HCT116 (cell line): ENCODE measurements at regions of chr10 and their contacts with region 1.

Region 1: DNA sequence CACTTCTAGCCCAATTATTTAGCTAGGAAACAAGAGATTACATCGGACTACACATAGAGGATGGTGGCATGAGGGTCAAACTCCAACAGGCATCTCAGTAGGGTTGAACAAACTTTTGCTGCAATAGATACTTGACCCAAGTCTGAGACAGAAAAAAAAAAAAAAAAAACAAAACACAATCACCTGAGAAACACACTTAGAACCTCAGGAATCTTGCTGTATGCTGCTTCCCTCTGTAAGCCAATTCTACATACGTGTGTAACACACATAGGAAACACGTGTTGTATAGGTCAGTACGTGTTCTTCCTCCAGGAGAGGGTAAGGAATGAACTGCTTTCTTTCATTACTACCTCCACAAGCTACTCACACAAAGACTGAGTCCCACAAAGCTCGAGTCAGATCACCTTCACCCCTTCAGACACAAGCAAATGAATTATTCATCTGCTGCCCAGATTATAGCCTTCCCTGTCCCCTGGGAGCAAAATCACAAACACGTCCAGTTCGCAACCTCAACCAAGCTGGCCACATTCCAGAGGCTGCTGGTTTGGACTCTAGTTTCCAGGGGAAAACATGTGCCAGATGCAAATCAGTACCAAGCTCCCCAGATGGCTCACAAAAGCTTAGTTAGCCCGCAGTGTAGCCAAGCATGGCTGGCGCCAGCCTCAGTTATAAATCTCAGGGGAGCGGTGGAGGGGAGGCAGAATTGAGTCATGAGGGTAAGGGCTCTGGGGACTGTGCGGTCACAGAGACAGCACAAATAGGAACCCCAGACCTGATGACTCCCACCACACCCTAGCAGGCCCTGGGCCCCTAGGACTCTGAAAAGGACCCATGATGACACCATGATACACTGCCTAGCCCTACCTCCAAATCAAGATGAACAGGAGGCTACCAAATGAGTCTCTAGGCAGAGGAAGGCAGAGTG is 15.1 kb downstream of the PSAP start:
- DNase-seq: no peak
- ATAC-seq: no peak
- H3K4me3 ChIP-seq: no peak overlapping the region
- H3K27ac ChIP-seq: no peak overlapping the region
- H3K4me1 ChIP-seq: peaks cover 18 to 44% of the 10 kb centered on the region in 2 experiments
- H3K27me3 ChIP-seq: no peaks in the 10 kb centered on the region
- CTCF ChIP-seq: no peak
- POLR2A ChIP-seq: no peak
- RAD21 ChIP-seq: no peak

Region 2: DNA sequence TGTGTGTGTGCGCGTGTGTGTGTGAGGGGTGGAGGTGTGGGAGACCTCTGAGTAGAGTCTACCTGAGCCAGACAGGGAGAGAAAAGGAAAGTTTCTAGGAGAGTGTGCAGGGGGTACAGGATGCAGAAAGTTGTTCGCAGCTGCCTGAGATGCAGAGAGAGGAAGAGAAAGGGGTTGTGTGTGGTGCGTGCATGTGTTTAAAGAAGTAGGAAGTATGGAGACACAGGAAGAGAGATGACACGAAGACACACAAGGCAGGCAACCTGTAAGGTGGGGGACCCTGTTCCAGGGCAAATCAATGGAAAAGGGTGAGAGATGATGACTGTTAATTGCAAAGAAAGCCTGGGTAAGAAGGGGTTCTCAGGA is 168.6 kb before region 1 on chr10:
- CTCF ChIA-PET with region 1: no interaction called
- POLR2A ChIA-PET with region 1: no interaction called
- RAD21 ChIA-PET with region 1: no interaction called
- intact Hi-C with region 1: no loop called
- DNase-seq: no peak
- ATAC-seq: no peak
- H3K4me3 ChIP-seq: no peak overlapping the region
- H3K27ac ChIP-seq: no peak overlapping the region
- H3K4me1 ChIP-seq: peaks cover 0 to 7% of the 10 kb centered on the region in 2 experiments; a peak in 2 of 4 replicates
- H3K27me3 ChIP-seq: no peaks in the 10 kb centered on the region
- CTCF ChIP-seq: no peak
- POLR2A ChIP-seq: no peak
- RAD21 ChIP-seq: no peak

Region 3: GRCh38 chr10:71850637-71851464 is 14.9 kb after region 1 on chr10 and contains the start of gene PSAP:
- CTCF ChIA-PET with region 1: interaction called, 6 read pairs
- POLR2A ChIA-PET with region 1: interaction called, 39 read pairs
- RAD21 ChIA-PET with region 1: interaction called in 1 of 2 experiments, 3 read pairs
- intact Hi-C with region 1: no loop called
- DNase-seq: peak; percentile 93
- ATAC-seq: peak; percentile 97
- H3K4me3 ChIP-seq: peak within 1 kb of the TSS; percentile 73 to 98
- H3K27ac ChIP-seq: peak within 1 kb of the TSS; percentile 70
- H3K4me1 ChIP-seq: peaks cover 4 to 30% of the 10 kb centered on the region in 2 experiments; a peak in 3 of 4 replicates
- H3K27me3 ChIP-seq: no peaks in the 10 kb centered on the region
- CTCF ChIP-seq: no peak
- POLR2A ChIP-seq: peak; percentile 94
- RAD21 ChIP-seq: no peak
- total RNA-seq, gene PSAP: 444 TPM

Region 4: DNA sequence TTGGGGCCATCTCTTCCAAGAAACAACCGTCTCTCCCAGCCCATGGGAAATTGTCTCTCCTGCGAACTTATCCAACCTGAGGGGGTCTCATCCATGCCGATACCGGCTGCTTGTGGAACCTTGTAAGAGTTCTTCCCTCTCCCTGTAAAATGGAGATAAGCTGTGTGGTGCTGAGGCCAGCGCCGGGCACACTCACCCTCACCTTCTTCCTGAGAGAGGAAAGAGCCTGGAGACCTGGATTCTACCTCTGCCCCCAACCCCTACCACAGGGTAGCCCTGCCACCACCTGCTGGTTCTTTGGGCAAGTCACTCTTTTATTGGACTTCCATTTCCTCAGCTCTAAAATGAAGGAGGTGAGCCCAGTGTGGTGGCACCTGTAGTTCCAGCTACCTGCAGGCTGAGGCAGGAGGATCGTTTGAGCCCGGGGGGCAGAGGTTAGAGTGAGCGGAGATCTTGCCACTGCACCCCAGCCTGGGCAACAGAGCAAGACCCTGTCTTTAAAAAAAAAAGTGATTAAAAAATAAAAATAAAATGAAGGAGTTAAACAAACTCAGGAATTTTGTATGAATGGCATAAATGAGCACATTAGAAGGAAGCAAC is 53.6 kb after region 1 on chr10:
- CTCF ChIA-PET with region 1: interaction called, 45 read pairs
- POLR2A ChIA-PET with region 1: no interaction called
- RAD21 ChIA-PET with region 1: no interaction called
- intact Hi-C with region 1: no loop called
- DNase-seq: no peak
- ATAC-seq: peak; percentile 28
- H3K4me3 ChIP-seq: peak overlapping the region in 1 of 2 experiments; percentile 75; a peak in 1 of 4 replicates
- H3K27ac ChIP-seq: peak overlapping the region; percentile 52
- H3K4me1 ChIP-seq: peaks cover 13 to 26% of the 10 kb centered on the region in 2 experiments
- H3K27me3 ChIP-seq: no peaks in the 10 kb centered on the region
- CTCF ChIP-seq: peak in 1 of 3 experiments; percentile 14; a peak in 1 of 6 replicates
- POLR2A ChIP-seq: no peak
- RAD21 ChIP-seq: peak; percentile 29; the same call in 1 of the 2 replicates